PC-9 (cell line): ENCODE measurements at regions of chr2 and their contacts with region 1.

Region 1: DNA sequence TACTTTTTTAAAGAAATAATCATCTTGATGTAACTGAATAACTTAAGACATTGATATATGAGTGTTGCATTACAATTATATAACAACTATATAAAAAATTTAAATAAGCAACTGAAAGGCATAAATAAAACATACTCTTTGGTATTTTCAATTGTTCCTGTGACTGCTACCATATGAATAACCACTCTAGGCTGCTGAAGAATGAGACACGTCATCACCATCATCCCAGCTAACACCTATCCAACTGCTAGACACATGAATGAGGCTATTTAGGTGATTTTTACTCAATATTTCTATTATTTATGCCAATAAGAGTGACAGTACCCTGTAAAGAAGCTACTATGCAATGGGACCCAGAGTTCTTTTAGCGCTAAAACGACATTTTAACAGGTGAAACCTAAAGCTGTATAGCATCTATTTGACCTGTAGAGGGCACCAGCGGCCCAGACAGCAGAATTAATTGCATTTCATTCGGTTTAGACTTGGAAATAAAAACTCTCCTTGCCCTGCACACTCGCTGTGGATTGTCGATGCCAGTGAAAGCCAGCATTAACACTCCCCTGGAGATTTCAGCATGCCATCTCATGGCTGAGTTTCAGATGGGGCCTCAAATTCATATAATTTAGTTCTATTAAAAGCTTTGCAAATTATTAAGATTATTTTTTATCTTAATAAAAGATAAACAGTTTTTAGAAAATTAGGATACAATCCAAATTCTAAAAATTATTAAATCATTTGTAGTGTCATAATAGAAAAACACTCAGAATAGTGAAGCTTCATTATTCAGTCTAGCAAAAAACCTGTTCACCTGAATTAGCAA is 89.4 kb upstream of the MAP2 start:
- DNase-seq: peak; percentile 44 to 51
- H3K4me3 ChIP-seq: no peak overlapping the region
- H3K27ac ChIP-seq: no peak overlapping the region
- H3K4me1 ChIP-seq: no peaks in the 10 kb centered on the region
- H3K27me3 ChIP-seq: no peaks in the 10 kb centered on the region
- CTCF ChIP-seq: peak; percentile 84

Region 2: GRCh38 chr2:208399202-208399601 is 935.2 kb before region 1 on chr2:
- CTCF ChIA-PET with region 1: no interaction called
- POLR2A ChIA-PET with region 1: no interaction called
- intact Hi-C with region 1: loop called (anchors 5 kb)
- DNase-seq: peak; percentile 10 to 40
- H3K4me3 ChIP-seq: no peak overlapping the region
- H3K27ac ChIP-seq: no peak overlapping the region
- H3K4me1 ChIP-seq: peaks cover 14% of the 10 kb centered on the region; the same call in 1 of the 2 replicates
- H3K27me3 ChIP-seq: no peaks in the 10 kb centered on the region
- CTCF ChIP-seq: no peak

Region 3: GRCh38 chr2:209556354-209556961 is 222.1 kb after region 1 on chr2:
- CTCF ChIA-PET with region 1: no interaction called
- POLR2A ChIA-PET with region 1: no interaction called
- intact Hi-C with region 1: loop called (anchors 5 kb)
- DNase-seq: peak in 1 of 2 experiments; percentile 34
- H3K4me3 ChIP-seq: no peak overlapping the region
- H3K27ac ChIP-seq: no peak overlapping the region
- H3K4me1 ChIP-seq: no peaks in the 10 kb centered on the region
- H3K27me3 ChIP-seq: no peaks in the 10 kb centered on the region
- CTCF ChIP-seq: peak; percentile 52

Region 4: GRCh38 chr2:209577376-209578357 is 243.3 kb after region 1 on chr2:
- CTCF ChIA-PET with region 1: no interaction called
- POLR2A ChIA-PET with region 1: no interaction called
- intact Hi-C with region 1: loop called (anchors 1 kb)
- DNase-seq: no peak
- H3K4me3 ChIP-seq: no peak overlapping the region
- H3K27ac ChIP-seq: no peak overlapping the region
- H3K4me1 ChIP-seq: no peaks in the 10 kb centered on the region
- H3K27me3 ChIP-seq: no peaks in the 10 kb centered on the region
- CTCF ChIP-seq: peak; percentile 67

Region 5: DNA sequence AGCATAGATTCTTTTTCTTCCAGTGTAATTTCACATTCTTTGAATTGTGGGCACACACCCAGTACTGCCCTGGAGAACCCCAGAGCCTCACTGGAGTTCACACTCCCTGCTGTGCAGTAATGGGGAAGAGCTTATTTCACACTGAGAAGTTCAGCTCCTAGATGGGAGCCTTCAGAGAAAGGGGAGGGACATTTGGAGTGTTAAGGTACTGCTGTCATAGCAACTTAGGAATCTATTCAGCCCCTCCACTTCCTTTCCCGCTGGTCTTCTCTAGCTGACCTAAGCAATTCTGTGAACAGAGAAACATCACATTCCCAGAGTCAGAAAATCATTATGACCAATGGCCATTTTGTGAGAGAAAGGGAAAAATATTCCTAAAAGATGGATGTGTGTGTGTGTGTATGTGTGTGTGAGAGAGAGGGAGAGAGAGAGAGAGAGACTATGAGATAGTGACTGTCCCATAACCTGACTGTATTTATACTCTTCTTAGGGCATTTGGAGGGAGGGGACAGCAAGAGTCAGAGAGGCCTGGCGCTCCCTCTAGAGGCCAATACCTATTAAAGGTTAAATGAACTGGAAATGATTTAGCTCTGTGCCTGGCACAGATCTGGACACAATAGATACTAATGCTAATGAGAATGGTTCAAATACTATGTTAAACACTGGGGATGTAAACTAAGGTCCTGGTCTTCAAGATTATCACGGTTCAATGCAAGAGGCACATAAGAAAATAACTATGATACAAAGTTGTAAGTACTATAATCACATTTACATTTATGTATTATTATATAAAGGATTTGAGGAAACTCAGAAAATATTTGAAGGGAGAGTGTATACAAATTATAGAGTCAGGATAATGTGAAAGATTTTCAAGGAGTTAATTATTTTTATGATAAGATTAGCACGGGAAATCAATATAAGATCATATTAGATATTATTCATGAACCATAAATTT is 626.5 kb after region 1 on chr2:
- CTCF ChIA-PET with region 1: no interaction called
- POLR2A ChIA-PET with region 1: no interaction called
- intact Hi-C with region 1: loop called (anchors 2 kb)
- DNase-seq: peak in 1 of 2 experiments; percentile 23
- H3K4me3 ChIP-seq: no peak overlapping the region
- H3K27ac ChIP-seq: no peak overlapping the region
- H3K4me1 ChIP-seq: no peaks in the 10 kb centered on the region
- H3K27me3 ChIP-seq: no peaks in the 10 kb centered on the region
- CTCF ChIP-seq: peak; percentile 72

Region 6: GRCh38 chr2:210195101-210195852 is 860.9 kb after region 1 on chr2:
- CTCF ChIA-PET with region 1: interaction called, 4 read pairs
- POLR2A ChIA-PET with region 1: no interaction called
- intact Hi-C with region 1: loop called (anchors 2 kb)
- DNase-seq: peak in 1 of 2 experiments; percentile 36
- H3K4me3 ChIP-seq: no peak overlapping the region
- H3K27ac ChIP-seq: no peak overlapping the region
- H3K4me1 ChIP-seq: no peaks in the 10 kb centered on the region
- H3K27me3 ChIP-seq: no peaks in the 10 kb centered on the region
- CTCF ChIP-seq: peak; percentile 68